Activated T-helper 1 cell treated with anti-CD3 and anti-CD28 coated beads, Interleukin-12 subunit alpha, Interleukin-12 subunit beta, Interleukin-2, Interleukin-4 antibody, amounts not matched to agents 30 ng/mL and 10 ng/mL and 1 ng/mL, durations not matched to agents 14 hours and 24 hours and 36 hours (primary cell): ENCODE measurements at regions of chr2 and their contacts with region 1.

Region 1: DNA sequence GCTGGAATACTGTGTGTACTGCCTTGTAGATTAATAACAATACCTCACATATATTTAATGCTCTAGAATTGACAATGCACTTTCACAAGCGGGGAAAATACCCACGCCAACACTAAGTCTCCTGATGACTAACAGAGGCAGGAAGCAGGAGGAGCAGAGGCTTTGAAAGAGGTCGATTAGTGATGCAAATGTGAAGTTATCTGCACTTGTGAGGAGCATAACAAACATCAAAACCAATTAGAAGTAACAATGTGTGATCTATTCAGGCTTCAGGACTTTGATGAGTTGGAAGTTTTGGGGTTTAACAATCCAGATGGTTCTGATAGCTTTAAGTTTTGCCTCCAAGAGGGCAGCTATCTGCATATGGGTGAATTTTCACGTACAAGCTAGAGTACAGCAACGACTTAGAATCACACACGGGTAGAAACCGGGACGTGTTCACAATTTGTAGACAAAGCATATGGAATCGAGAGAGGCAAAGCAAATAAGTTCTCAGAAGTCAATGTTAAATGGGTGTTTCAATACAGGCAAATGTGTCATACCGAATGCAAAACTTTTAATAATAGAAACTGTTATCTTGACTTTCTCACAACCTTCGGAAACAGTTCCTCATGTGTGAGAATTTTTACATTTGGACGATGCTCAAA is 114.5 kb downstream of the METTL8 start:
- DNase-seq: peak; percentile 53
- H3K4me3 Mint-ChIP-seq: peak overlapping the region; percentile 75
- H3K27ac Mint-ChIP-seq: peak overlapping the region; percentile 95
- H3K4me1 Mint-ChIP-seq: peaks cover 64% of the 10 kb centered on the region
- H3K27me3 Mint-ChIP-seq: no peaks in the 10 kb centered on the region

Region 2: DNA sequence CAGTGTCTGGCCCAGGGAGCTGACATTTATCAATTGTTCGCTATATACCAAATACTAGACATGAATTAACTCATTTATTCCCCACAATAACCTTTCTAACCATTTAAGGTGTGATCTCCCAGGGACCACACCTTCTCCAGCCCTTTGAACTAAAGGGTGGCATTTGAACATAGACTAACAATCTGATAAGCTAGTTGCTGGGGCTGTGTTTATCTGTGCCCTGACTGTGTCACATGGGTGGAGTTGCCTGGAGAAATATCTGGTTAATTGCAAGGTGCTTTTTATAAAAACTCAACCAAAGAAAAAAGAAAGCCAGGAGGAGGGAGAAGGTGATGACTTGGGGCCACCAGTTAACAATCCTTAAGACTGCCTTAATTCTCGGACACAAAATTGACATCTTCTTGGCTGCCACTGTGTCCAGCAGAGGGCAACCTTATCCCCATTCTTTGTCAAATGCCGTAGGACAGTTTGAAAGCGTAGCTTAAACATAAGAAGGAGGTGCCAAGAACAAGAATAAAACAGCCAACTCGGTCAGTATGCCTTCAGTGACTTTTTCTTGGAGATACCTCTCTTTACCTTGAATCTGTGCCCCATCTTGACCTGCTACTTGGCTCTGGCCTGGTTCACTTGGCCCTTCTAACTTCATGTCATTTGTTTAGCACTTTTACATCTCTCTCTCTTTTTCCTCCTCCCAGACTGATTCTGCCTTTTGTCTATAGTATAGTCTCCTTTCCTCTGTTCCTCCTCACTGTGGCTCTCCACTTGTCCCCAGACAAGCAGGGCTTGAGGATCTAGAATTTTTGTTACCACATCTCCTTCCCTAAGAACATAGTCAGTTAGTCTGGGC is 958.0 kb before region 1 on chr2:
- intact Hi-C with region 1: loop called (anchors 1 kb)
- DNase-seq: peak; percentile 39
- H3K4me3 Mint-ChIP-seq: no peak overlapping the region
- H3K27ac Mint-ChIP-seq: peak overlapping the region; percentile 94
- H3K4me1 Mint-ChIP-seq: peaks cover 33% of the 10 kb centered on the region
- H3K27me3 Mint-ChIP-seq: peaks cover 2% of the 10 kb centered on the region

Region 3: GRCh38 chr2:170973492-170974303 is 345.6 kb before region 1 on chr2:
- intact Hi-C with region 1: loop called (anchors 1 kb)
- DNase-seq: peak; percentile 77
- H3K4me3 Mint-ChIP-seq: peak overlapping the region; percentile 73
- H3K27ac Mint-ChIP-seq: no peak overlapping the region
- H3K4me1 Mint-ChIP-seq: peaks cover 16% of the 10 kb centered on the region
- H3K27me3 Mint-ChIP-seq: no peaks in the 10 kb centered on the region

Region 4: DNA sequence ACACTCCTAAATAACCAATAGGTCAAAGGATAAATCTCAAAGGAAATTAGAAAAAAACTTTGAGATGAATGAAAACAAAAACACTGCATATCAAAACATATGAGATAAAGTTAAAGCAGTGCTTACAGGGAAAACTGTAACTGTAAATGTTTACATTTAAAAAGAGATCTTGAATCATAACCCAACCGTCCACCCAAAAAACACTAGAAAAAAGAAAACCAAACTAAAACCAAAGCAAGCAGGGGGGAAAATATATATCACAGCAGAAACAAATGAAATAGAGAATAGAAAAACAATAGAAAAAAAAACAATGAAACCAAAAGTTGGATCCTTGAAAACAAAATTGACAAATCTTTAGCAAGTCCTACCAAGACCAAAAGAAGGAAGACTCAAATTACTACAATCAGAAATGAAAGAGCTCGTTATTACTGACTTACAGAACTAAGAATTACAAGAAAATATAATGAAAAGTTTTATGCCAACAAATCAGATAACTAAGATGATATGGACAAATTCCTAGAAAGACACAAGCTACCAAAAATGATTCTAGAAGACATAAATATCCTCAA is 224.2 kb before region 1 on chr2:
- intact Hi-C with region 1: loop called (anchors 2 kb)
- DNase-seq: no peak
- H3K4me3 Mint-ChIP-seq: no peak overlapping the region
- H3K27ac Mint-ChIP-seq: peak overlapping the region; percentile 72
- H3K4me1 Mint-ChIP-seq: peaks cover 32% of the 10 kb centered on the region
- H3K27me3 Mint-ChIP-seq: no peaks in the 10 kb centered on the region

Region 5: GRCh38 chr2:171173089-171173488 is 146.2 kb before region 1 on chr2:
- intact Hi-C with region 1: loop called (anchors 1 kb)
- DNase-seq: no peak
- H3K4me3 Mint-ChIP-seq: no peak overlapping the region
- H3K27ac Mint-ChIP-seq: no peak overlapping the region
- H3K4me1 Mint-ChIP-seq: peaks cover 25% of the 10 kb centered on the region
- H3K27me3 Mint-ChIP-seq: peaks cover 6% of the 10 kb centered on the region

Region 6: GRCh38 chr2:171347591-171348032 is 28.3 kb after region 1 on chr2:
- intact Hi-C with region 1: loop called (anchors 2 kb)
- DNase-seq: no peak
- H3K4me3 Mint-ChIP-seq: no peak overlapping the region
- H3K27ac Mint-ChIP-seq: peak overlapping the region; percentile 61
- H3K4me1 Mint-ChIP-seq: peaks cover 16% of the 10 kb centered on the region
- H3K27me3 Mint-ChIP-seq: peaks cover 4% of the 10 kb centered on the region

Region 7: GRCh38 chr2:173134703-173135102 is 1815.4 kb after region 1 on chr2:
- intact Hi-C with region 1: loop called (anchors 1 kb)
- DNase-seq: no peak
- H3K4me3 Mint-ChIP-seq: peak overlapping the region; percentile 58
- H3K27ac Mint-ChIP-seq: peak overlapping the region; percentile 76
- H3K4me1 Mint-ChIP-seq: peaks cover 76% of the 10 kb centered on the region
- H3K27me3 Mint-ChIP-seq: peaks cover 21% of the 10 kb centered on the region